Activated CD8-positive, alpha-beta T cell treated with anti-CD3 and anti-CD28 coated beads for 36 hours (primary cell): ENCODE measurements at regions of chr2 and their contacts with region 1.

Region 1: GRCh38 chr2:127324635-127325034 is 30.7 kb upstream of the ERCC3 start:
- DNase-seq: no peak
- ATAC-seq: no peak
- H3K4me3 Mint-ChIP-seq: no peak overlapping the region
- H3K27ac Mint-ChIP-seq: no peak overlapping the region
- H3K4me1 Mint-ChIP-seq: peaks cover 6% of the 10 kb centered on the region
- H3K27me3 Mint-ChIP-seq: no peaks in the 10 kb centered on the region
- CTCF ChIP-seq: peak; percentile 55

Region 2: GRCh38 chr2:127174136-127174535 is 150.5 kb before region 1 on chr2:
- CTCF ChIA-PET with region 1: no interaction called
- POLR2A ChIA-PET with region 1: no interaction called
- intact Hi-C with region 1: no loop called
- DNase-seq: peak; percentile 22
- ATAC-seq: peak; percentile 51
- H3K4me3 Mint-ChIP-seq: no peak overlapping the region
- H3K27ac Mint-ChIP-seq: no peak overlapping the region
- H3K4me1 Mint-ChIP-seq: no peaks in the 10 kb centered on the region
- H3K27me3 Mint-ChIP-seq: no peaks in the 10 kb centered on the region
- CTCF ChIP-seq: peak; percentile 32

Region 3: DNA sequence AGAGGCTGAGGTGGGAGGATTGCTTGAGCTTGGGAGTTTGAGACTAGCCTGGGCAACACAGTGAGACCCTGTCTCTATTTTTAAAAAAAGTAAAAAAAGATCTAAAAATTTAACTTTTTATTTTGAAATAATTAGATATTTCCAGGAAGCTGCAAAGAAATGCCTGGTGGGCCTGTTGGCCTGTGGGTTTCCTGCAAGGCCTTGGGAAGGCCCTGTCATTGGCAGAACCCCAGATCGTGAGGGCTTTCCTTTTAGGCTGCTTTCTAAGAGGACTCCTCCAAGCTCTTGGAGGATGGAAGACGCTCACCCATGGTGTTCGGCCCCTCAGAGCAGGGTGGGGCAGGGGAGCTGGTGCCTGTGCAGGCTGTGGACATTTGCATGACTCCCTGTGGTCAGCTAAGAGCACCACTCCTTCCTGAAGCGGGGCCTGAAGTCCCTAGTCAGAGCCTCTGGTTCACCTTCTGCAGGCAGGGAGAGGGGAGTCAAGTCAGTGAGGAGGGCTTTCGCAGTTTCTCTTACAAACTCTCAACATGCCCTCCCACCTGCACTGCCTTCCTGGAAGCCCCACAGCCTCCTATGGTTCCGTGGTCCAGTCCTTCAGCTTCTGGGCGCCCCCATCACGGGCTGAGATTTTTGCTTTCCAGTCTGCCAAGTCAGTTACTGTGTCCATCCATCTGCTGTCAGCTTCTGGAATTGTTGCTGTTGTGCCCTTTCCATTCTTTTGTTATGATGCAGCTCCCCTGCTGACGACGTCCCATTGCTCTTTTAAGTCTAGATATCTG is 100.2 kb after region 1 on chr2:
- CTCF ChIA-PET with region 1: no interaction called
- POLR2A ChIA-PET with region 1: no interaction called
- intact Hi-C with region 1: no loop called
- DNase-seq: no peak
- ATAC-seq: no peak
- H3K4me3 Mint-ChIP-seq: no peak overlapping the region
- H3K27ac Mint-ChIP-seq: no peak overlapping the region
- H3K4me1 Mint-ChIP-seq: peaks cover 8% of the 10 kb centered on the region
- H3K27me3 Mint-ChIP-seq: peaks cover 40% of the 10 kb centered on the region
- CTCF ChIP-seq: no peak

Region 4: DNA sequence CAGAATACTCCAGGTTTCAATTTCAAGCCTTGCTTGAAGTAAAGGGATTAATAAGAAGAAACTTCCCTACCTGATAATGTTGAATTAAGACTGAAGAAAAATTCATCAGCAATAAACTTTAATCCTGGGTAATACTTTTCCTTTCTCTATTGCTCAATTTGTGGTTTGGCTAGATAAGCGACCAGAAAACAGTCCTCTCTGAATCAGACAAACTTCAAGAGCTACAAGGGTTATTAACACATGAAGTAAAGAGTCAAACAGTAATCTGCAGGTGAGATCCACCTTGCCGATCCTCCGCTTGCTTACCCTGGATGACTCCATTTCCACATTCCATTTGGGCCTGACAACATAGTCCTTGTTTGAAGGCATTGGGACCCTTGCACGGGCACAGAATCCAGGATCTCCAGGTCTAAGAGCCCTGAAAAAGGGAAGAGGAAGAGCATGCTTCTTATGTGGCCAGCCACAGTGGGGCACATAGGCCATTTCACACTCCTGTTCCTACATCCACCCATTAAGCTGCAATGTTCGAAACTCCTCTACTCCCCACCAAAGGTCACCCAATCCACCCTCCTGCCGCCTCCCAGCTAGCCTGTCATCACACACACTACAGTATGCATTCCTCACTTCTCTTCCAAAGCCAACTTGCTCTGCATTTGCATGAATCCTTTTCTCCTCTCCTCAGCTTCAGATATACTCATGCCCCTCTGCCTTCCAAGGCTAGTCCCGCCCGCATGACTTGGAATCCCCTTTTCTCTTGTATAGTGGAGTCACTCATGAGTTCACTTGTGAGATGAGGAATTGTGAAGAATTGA is 161.8 kb after region 1 on chr2:
- CTCF ChIA-PET with region 1: interaction called, 5 read pairs
- POLR2A ChIA-PET with region 1: no interaction called
- intact Hi-C with region 1: loop called (anchors 10 kb)
- DNase-seq: no peak
- ATAC-seq: no peak
- H3K4me3 Mint-ChIP-seq: no peak overlapping the region
- H3K27ac Mint-ChIP-seq: peak overlapping the region; percentile 81
- H3K4me1 Mint-ChIP-seq: peaks cover 32% of the 10 kb centered on the region
- H3K27me3 Mint-ChIP-seq: no peaks in the 10 kb centered on the region
- CTCF ChIP-seq: no peak